Activated CD4-positive, alpha-beta memory T cell treated with anti-CD3 and anti-CD28 coated beads for 36 hours (primary cell): ENCODE measurements at regions of chr6 and their contacts with region 1.

Region 1: DNA sequence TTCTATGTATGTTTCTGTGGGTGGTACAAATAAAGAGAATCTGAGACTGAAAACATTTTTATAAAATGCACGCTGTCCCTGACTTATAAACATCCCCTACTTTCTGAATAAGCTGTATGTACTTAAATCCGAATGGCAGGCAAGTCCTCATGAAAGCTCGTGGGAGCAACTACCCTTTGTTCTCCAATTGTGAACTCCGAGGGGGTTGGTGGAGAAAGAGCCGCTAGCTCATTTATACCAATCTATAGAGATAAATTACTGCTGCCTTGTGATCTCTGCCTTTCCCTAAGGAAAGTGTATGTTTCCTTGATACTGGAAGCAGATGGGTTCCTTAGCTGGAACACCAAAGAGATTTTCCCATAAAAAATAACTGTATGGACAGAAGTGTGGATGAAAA is 84.5 kb downstream of the GJA10 start:
- DNase-seq: no peak
- H3K4me3 Mint-ChIP-seq: no peak overlapping the region
- H3K27ac Mint-ChIP-seq: no peak overlapping the region
- H3K4me1 Mint-ChIP-seq: peaks cover 16% of the 10 kb centered on the region
- H3K27me3 Mint-ChIP-seq: no peaks in the 10 kb centered on the region

Region 2: GRCh38 chr6:89966913-89967312 is 11.8 kb before region 1 on chr6:
- CTCF ChIA-PET with region 1: interaction called, 3 read pairs
- POLR2A ChIA-PET with region 1: interaction called, 3 read pairs
- intact Hi-C with region 1: loop called (anchors 1 kb)
- DNase-seq: no peak
- H3K4me3 Mint-ChIP-seq: no peak overlapping the region
- H3K27ac Mint-ChIP-seq: peak overlapping the region; percentile 68
- H3K4me1 Mint-ChIP-seq: peaks cover 53% of the 10 kb centered on the region
- H3K27me3 Mint-ChIP-seq: no peaks in the 10 kb centered on the region